Mammary epithelial cell (primary cell): ENCODE measurements at regions of chr6 and their contacts with region 1.

Region 1: DNA sequence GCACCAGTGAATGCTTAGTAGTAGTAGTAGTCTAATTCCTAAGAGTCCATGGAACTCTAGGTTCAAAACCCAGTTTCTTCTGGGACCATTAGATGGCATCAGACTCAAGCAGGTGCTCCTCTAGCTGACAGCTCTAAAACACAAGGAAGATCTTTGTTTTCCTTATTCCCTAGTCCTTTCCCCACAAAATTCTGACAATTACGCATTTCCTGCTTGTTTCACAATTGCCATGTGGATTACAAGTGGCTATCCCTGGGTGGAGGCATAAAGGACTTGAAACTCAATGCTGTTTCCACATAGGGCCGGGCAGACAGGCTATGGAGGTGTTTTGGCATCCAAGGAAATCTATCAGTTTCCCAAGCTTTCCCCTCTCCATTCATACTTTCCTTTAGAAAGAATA is 9.2 kb upstream of the HLA-DOB start:
- DNase-seq: peak; percentile 84
- H3K4me3 ChIP-seq: no peak overlapping the region
- H3K27ac ChIP-seq: peak overlapping the region; percentile 47
- H3K4me1 ChIP-seq: peaks cover 9% of the 10 kb centered on the region
- H3K27me3 ChIP-seq: no peaks in the 10 kb centered on the region
- CTCF ChIP-seq: peak; percentile 41 to 64

Region 2: DNA sequence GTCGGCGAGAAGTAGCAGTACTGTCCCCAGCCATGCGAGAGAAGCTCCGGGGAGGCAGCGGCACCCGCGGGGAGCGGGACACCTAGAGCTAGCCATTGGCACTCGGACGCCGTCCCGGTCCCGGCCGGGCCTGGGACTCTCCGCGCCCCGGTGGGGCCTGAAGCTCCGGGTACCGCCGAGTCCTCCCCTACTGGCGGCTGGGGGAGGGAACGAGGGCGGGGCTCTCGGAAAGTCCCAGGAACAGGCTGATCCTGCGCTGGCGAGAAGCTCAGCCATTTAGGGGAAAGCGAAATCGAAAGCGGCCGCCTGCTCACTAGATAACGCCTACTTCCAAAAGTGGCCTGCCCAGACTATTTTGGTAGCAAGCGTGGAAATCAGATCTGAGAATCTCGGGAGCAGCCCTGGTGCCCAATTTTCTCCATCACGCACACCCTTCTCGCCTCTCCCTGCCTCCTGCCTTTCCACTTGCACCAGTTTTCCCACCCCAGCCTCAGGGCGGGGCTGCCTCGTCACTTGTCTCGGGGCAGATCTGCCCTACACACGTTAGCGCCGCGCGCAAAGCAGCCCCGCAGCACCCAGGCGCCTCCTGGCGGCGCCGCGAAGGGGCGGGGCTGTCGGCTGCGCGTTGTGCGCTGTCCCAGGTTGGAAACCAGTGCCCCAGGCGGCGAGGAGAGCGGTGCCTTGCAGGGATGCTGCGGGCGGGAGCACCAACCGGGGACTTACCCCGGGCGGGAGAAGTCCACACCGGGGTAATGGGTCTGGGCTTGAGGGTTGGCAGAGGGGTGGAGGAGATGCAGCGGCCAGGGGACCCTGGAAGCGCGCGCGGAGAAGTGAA is 27.8 kb after region 1 on chr6 and contains the starts of genes PSMB9 and TAP1:
- CTCF ChIA-PET with region 1: interaction called, 8 read pairs
- dilution Hi-C with region 1: no loop called
- in situ Hi-C with region 1: no loop called
- intact Hi-C with region 1: loop called (anchors 1 kb)
- DNase-seq: peak; percentile 93
- H3K4me3 ChIP-seq: peak within 1 kb of the TSS; percentile 62 to 94 (median 86)
- H3K27ac ChIP-seq: peak within 1 kb of the TSS; percentile 74
- H3K4me1 ChIP-seq: peaks cover 13% of the 10 kb centered on the region
- H3K27me3 ChIP-seq: no peaks in the 10 kb centered on the region
- CTCF ChIP-seq: peak; percentile 49 to 82
- total RNA-seq, gene PSMB9: 2.7 to 10.1 TPM
- total RNA-seq, gene TAP1: 49.2 to 50.1 TPM

Region 3: GRCh38 chr6:32868257-32868788 is 42.4 kb after region 1 on chr6:
- CTCF ChIA-PET with region 1: interaction called, 6 read pairs
- dilution Hi-C with region 1: no loop called
- in situ Hi-C with region 1: no loop called
- intact Hi-C with region 1: loop called (anchors 1 kb)
- DNase-seq: peak; percentile 54
- H3K4me3 ChIP-seq: no peak overlapping the region
- H3K27ac ChIP-seq: no peak overlapping the region
- H3K4me1 ChIP-seq: no peaks in the 10 kb centered on the region
- H3K27me3 ChIP-seq: peaks cover 2% of the 10 kb centered on the region
- CTCF ChIP-seq: peak; percentile 71 to 83

Region 4: DNA sequence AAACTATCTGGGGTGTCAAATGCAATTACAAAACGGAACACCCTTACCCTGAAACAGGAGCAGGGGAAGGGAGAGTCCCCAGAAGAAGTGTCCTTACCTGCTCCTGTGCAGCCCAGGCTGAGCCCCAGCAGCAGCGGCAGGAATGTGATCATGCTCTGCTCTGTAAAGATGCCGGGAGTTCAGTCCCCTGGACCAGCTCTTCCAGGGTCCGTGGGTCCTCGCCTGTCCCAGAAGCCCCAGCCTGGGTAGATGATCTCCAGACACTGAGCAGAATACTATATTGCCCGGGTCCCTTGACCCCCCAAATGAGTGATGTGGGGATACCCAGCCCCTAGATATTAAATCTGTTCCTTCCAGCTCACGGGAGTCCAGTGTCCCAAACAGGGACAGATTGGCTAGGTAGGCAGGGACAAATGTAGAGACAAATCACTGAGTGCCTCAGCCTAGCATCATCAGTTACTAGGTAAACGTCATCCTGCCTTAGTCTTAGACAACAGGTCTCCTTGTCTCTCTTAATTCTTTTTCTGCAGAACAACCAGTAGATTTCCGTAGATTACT is 114.8 kb after region 1 on chr6 and contains the start of gene HLA-DMB:
- CTCF ChIA-PET with region 1: no interaction called
- dilution Hi-C with region 1: no loop called
- in situ Hi-C with region 1: no loop called
- intact Hi-C with region 1: loop called (anchors 5 kb)
- DNase-seq: peak; percentile 65
- H3K4me3 ChIP-seq: peak within 1 kb of the TSS in 2 of 3 experiments; percentile 4 to 29
- H3K27ac ChIP-seq: no peak within 1 kb of the TSS
- H3K4me1 ChIP-seq: no peaks in the 10 kb centered on the region
- H3K27me3 ChIP-seq: no peaks in the 10 kb centered on the region
- CTCF ChIP-seq: no peak
- total RNA-seq, gene HLA-DMB: not detected

Region 5: GRCh38 chr6:32971581-32972352 is 145.8 kb after region 1 on chr6:
- CTCF ChIA-PET with region 1: no interaction called
- dilution Hi-C with region 1: loop called (anchors 10 kb)
- in situ Hi-C with region 1: no loop called
- intact Hi-C with region 1: no loop called
- DNase-seq: peak; percentile 100
- H3K4me3 ChIP-seq: peak overlapping the region; percentile 83 to 90 (median 89)
- H3K27ac ChIP-seq: peak overlapping the region; percentile 99
- H3K4me1 ChIP-seq: peaks cover 24% of the 10 kb centered on the region
- H3K27me3 ChIP-seq: no peaks in the 10 kb centered on the region
- CTCF ChIP-seq: no peak